ENCODE measurements at regions of chr16 and their contacts with region 1.

Region 1: GRCh38 chr16:85010931-85011845 is at the start of gene ZDHHC7:
- DNase-seq: peak; percentile 75
- ATAC-seq: peak; percentile 84
- H3K4me3 ChIP-seq: peak within 1 kb of the TSS; percentile 98
- H3K27ac ChIP-seq: peak within 1 kb of the TSS; percentile 86
- H3K4me1 ChIP-seq: peaks cover 4% of the 10 kb centered on the region
- H3K27me3 ChIP-seq: no peaks in the 10 kb centered on the region
- CTCF ChIP-seq: no peak
- total RNA-seq, gene ZDHHC7: 37.0 and 42.1 TPM in 2 replicates

Region 2: GRCh38 chr16:84970447-84971127 is 40.6 kb before region 1 on chr16:
- CTCF ChIA-PET with region 1: interaction called, 4 read pairs
- POLR2A ChIA-PET with region 1: no interaction called
- intact Hi-C with region 1: loop called (anchors 5 kb)
- DNase-seq: peak; percentile 73
- ATAC-seq: peak; percentile 93
- H3K4me3 ChIP-seq: no peak overlapping the region
- H3K27ac ChIP-seq: no peak overlapping the region
- H3K4me1 ChIP-seq: peaks cover 10% of the 10 kb centered on the region
- H3K27me3 ChIP-seq: no peaks in the 10 kb centered on the region
- CTCF ChIP-seq: peak; percentile 85

Region 3: GRCh38 chr16:84995663-84996062 is 15.5 kb before region 1 on chr16:
- CTCF ChIA-PET with region 1: no interaction called
- POLR2A ChIA-PET with region 1: interaction called, 4 read pairs
- intact Hi-C with region 1: loop called (anchors 2 kb)
- DNase-seq: no peak
- ATAC-seq: no peak
- H3K4me3 ChIP-seq: no peak overlapping the region
- H3K27ac ChIP-seq: peak overlapping the region; percentile 97
- H3K4me1 ChIP-seq: peaks cover 58% of the 10 kb centered on the region
- H3K27me3 ChIP-seq: no peaks in the 10 kb centered on the region
- CTCF ChIP-seq: no peak

Region 4: DNA sequence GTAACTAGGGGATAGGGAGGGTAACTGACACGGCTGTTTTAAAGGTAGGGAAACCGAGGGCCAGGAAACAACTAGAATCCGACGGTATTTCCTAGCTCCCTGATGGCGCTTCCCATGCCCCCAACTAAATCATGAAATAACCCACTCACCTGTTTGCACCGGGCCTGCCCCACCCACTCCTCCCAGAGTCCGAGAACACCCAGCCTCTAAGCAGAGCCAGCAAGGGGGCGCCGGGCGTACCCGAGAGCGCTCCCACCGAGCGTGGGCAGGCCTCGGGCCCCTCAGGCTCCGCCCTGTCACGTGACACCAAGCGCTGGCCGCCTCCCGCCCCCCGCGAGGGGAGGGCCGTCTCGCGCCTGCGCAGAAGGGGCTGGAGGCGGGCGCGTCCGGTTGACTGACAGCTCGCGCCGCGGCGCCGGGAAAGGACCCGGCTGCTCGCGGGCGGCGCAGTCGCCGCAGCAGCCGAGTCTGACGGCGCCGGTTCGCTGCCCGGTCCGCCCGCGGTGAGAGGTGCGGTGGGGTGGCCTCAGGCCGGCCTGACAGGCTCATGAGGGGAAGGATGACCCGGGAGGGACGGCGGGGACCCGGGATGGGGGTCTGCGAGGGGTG is 16.3 kb after region 1 on chr16 and contains the start of gene KIAA0513:
- CTCF ChIA-PET with region 1: interaction called, 4 read pairs
- POLR2A ChIA-PET with region 1: interaction called, 6 read pairs
- intact Hi-C with region 1: loop called (anchors 2 kb)
- DNase-seq: peak; percentile 90
- ATAC-seq: peak; percentile 53
- H3K4me3 ChIP-seq: peak within 1 kb of the TSS; percentile 79
- H3K27ac ChIP-seq: peak within 1 kb of the TSS; percentile 84
- H3K4me1 ChIP-seq: peaks cover 46% of the 10 kb centered on the region
- H3K27me3 ChIP-seq: no peaks in the 10 kb centered on the region
- CTCF ChIP-seq: no peak
- total RNA-seq, gene KIAA0513: 5.5 and 7.8 TPM in 2 replicates

Region 5: GRCh38 chr16:85086347-85087291 is 75.4 kb after region 1 on chr16:
- CTCF ChIA-PET with region 1: interaction called, 5 read pairs
- POLR2A ChIA-PET with region 1: no interaction called
- intact Hi-C with region 1: loop called (anchors 5 kb)
- DNase-seq: peak; percentile 64
- ATAC-seq: peak; percentile 81
- H3K4me3 ChIP-seq: no peak overlapping the region
- H3K27ac ChIP-seq: no peak overlapping the region
- H3K4me1 ChIP-seq: no peaks in the 10 kb centered on the region
- H3K27me3 ChIP-seq: no peaks in the 10 kb centered on the region
- CTCF ChIP-seq: peak; percentile 63

Region 6: GRCh38 chr16:85181739-85182129 is 170.5 kb after region 1 on chr16:
- CTCF ChIA-PET with region 1: no interaction called
- POLR2A ChIA-PET with region 1: no interaction called
- intact Hi-C with region 1: no loop called
- DNase-seq: no peak
- ATAC-seq: no peak
- H3K4me3 ChIP-seq: no peak overlapping the region
- H3K27ac ChIP-seq: no peak overlapping the region
- H3K4me1 ChIP-seq: no peaks in the 10 kb centered on the region
- H3K27me3 ChIP-seq: no peaks in the 10 kb centered on the region
- CTCF ChIP-seq: no peak

Measured in PC-3 (cell line).